ENCODE measurements at regions of chr5 and their contacts with region 1.

Region 1: DNA sequence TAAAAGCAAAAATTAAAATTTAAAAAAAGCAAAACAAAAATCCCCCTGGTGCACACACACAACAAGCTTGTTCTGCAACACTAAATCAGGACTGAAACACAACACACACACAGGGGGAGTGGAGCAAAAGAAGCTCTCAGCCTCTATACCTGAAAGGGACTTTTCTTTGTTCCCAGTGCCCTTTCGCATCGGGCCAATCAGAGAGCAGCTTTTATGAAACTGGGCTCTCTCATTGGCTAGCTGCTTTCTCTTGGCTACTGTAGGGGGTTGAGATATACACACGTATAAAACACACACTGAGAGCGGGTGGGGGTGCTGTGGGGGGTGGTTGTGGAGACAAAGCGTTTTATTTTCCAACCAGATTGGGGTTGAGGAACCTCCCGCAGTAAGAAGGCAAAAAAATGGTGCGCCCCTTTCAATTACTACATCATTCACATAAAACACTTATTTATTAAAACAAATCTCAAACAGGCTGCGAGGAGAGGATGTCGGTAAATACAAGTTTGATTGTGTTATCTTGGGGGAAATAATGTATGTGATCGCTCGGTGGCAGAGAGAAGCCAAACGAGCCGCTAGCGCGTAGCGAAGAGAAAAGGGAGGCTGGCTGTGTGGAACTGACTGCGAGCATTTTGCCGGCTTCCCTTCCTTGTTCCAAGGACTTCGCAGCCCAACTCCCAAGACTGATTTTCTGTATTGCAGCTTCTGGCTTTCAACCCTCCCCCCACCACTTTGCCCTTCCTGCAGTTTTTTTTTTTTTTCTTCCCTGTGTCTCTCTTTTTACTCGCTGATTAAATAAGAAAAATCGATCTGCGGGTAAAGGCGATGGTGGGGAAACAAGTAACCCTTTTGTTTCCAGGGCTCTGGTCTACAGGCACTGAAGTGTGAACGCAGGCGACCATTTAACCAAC is 2.5 kb upstream of the ZNF608 start:
- DNase-seq: peak; percentile 69
- ATAC-seq: peak; percentile 81 to 89

Region 2: GRCh38 chr5:124402144-124402581 is 346.8 kb before region 1 on chr5:
- intact Hi-C with region 1: loop called in 1 of 2 experiments (anchors 10 kb)
- DNase-seq: peak; percentile 36
- ATAC-seq: peak; percentile 74 to 91

Region 3: GRCh38 chr5:124655922-124656511 is 92.9 kb before region 1 on chr5:
- intact Hi-C with region 1: loop called (anchors 2 to 5 kb)
- DNase-seq: no peak
- ATAC-seq: peak; percentile 19 to 66

Region 4: GRCh38 chr5:125012727-125013451 is 263.9 kb after region 1 on chr5:
- intact Hi-C with region 1: loop called in 1 of 2 experiments (anchors 2 kb)
- DNase-seq: no peak
- ATAC-seq: peak; percentile 67 to 75